Vagina (tissue), 2 donors: ENCODE measurements at regions of chr20 and their contacts with region 1.

Region 1: DNA sequence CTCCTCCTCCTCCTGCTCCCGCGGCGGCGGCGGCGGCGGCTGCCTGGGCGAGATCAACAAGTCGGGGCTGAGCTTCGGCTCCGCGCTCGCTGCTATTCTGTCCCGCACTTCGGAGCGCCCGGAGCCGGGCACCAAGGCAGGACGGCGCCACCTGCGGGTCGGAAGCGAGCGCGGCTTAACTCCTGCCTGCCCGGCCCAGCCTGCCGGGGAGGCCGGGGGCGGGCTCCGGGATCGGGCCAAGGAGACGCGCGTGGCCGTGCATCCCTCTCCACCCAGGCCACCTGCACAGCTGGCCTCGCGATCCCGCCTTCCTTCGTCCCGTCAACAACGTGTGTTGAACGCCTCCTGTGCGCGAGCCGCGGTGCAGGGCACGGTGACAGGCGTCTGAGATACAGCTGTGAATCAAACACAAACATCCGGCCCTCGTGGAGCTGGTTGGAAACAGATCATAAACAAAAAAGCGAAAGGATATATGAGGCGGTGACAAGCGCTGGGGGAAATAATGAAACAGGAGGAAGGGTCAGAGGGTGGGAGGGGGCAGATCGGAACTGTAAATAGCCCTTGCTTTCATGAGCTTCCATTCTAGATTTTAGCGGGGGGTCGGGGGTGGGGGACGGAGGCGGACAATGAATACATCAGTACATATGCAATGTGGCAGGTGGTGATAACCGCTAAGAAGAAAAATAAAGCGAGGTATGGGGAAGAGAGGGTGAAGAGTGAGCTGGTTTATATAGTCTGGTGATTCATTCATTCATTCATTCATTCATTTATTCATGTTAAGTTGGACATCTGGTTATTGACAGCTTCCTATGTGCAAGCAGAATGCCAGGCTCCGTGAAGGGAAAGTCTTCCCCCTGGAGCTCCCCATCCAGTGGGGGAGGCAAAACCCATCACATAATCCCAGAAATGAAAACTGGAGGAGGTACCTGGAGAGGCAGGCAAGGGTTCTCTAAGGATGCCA is 2.0 kb upstream of the KCNB1 start:
- DNase-seq: no peak
- H3K4me3 ChIP-seq: peak overlapping the region; percentile 24 to 60
- H3K27ac ChIP-seq: no peak overlapping the region
- H3K4me1 ChIP-seq: peaks cover 27% of the 10 kb centered on the region
- H3K27me3 ChIP-seq: peaks cover 6% of the 10 kb centered on the region
- CTCF ChIP-seq: peak; percentile 23 to 78 (median 73)
- POLR2A ChIP-seq: no peak

Region 2: GRCh38 chr20:49330544-49331239 is 153.8 kb before region 1 on chr20:
- intact Hi-C with region 1: loop called (anchors 5 kb)
- DNase-seq: no peak
- H3K4me3 ChIP-seq: no peak overlapping the region
- H3K27ac ChIP-seq: no peak overlapping the region
- H3K4me1 ChIP-seq: no peaks in the 10 kb centered on the region
- H3K27me3 ChIP-seq: no peaks in the 10 kb centered on the region
- CTCF ChIP-seq: no peak
- POLR2A ChIP-seq: no peak

Region 3: GRCh38 chr20:49384437-49385088 is 99.9 kb before region 1 on chr20:
- intact Hi-C with region 1: loop called (anchors 5 kb)
- DNase-seq: no peak
- H3K4me3 ChIP-seq: no peak overlapping the region
- H3K27ac ChIP-seq: no peak overlapping the region
- H3K4me1 ChIP-seq: peaks cover 18% of the 10 kb centered on the region
- H3K27me3 ChIP-seq: no peaks in the 10 kb centered on the region
- CTCF ChIP-seq: peak in 2 of 3 experiments; percentile 38 to 55
- POLR2A ChIP-seq: no peak